ENCODE measurements at regions of chr9 and their contacts with region 1.

Region 1: DNA sequence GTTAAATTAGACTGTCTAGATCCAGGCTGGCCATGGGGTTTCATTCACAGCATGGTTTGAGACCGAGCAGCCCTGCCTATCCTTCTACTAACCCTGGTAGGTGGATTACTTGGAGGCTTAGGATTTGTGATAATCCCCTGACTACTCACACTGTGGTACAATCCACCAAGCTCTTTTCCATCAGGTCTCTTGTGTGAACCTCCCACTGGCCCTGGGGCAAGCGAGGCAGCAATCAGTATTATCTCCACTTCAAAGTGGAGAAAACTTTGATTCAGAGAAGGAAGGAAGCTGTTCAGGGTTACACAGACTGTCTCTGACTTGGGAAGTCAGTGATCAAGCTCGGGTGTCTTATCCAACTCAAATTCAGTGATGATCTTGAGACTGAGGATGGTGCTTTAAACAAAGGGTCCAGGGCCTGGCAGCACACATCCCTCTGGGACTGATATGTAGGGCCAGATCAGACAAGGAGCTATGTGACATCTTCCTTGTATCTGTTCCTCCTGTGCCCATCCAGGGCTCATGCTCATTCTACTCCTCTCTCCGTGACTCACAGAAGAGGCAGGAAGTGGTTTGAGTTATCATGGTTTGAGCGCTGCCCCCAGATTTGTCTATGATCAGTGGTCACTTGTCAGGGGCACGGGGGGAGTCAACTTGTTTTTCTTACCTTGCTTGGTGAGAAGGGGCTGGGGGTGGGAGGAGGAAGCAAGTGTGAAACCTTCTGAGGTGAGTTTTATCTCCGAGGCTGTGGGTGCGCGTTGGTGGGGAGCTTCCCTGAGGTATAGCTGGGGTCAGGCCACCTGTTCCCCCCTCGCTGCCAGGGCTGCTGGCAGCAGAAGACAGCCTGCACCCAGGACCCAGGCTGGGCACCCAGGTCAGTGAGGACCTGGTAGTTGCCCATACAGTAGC is 48.6 kb downstream of the RGS3 start:
- DNase-seq: peak; percentile 57
- H3K4me3 Mint-ChIP-seq: peak overlapping the region; percentile 62
- H3K27ac Mint-ChIP-seq: peak overlapping the region; percentile 90
- H3K4me1 Mint-ChIP-seq: peaks cover 76% of the 10 kb centered on the region
- H3K27me3 Mint-ChIP-seq: peaks cover 3% of the 10 kb centered on the region

Region 2: GRCh38 chr9:113150670-113151611 is 361.2 kb before region 1 on chr9 and contains the start of gene SLC31A2:
- intact Hi-C with region 1: loop called (anchors 1 kb)
- DNase-seq: peak; percentile 84
- H3K4me3 Mint-ChIP-seq: peak within 1 kb of the TSS; percentile 80
- H3K27ac Mint-ChIP-seq: peak within 1 kb of the TSS; percentile 44
- H3K4me1 Mint-ChIP-seq: peaks cover 34% of the 10 kb centered on the region
- H3K27me3 Mint-ChIP-seq: peaks cover 13% of the 10 kb centered on the region
- total RNA-seq, gene SLC31A2: 6.0 and 6.5 TPM in 2 replicates

Region 3: DNA sequence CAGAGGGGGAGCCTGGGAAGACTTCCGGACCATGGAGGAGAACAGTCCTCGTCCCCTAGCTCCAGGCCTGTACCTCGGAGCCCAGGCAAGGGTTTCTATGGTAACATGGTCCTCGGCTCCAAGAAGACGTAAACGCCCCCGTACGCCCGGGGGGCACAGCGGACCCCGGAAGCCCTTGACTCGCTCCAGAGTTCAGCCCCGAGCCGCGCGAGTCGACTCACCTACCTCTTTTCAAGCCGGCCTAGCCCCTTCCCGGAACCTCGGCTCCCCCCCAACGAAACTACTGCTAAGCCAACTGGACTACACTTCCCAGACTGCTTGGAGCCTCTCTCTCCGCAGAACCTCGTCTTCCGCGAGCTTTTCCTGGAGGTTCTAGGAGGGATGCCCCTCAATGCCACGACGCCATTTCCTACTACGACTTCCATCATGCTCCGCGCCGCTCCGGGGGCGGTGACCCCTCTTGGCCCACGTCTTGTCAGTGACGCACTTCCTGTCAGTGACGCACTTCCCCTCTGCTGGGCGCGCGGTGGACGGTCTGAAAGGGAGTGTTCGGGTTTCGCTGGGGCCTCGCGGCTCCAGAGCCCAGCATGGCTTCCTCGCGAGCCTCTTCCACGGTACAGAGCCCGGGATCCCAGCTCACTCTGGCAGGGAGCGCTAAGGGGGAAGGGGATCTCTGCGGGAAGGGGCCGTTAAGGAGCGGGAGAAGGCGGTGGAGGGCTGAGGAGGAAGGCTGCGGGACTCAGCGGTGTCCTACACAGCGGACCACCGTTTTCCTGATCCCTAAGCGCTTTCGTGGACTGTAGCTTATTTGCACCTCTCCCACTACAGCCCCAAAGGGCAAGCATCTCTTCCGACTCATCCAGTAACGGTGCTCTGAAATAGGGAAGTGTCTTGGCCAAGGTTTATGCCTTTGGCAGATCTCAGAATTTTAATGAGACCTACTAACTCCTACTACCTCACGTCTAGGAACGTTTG is 236.7 kb before region 1 on chr9 and contains the starts of genes CDC26 and PRPF4:
- intact Hi-C with region 1: loop called (anchors 1 kb)
- DNase-seq: peak; percentile 94
- H3K4me3 Mint-ChIP-seq: no peak within 1 kb of the TSS
- H3K27ac Mint-ChIP-seq: no peak within 1 kb of the TSS
- H3K4me1 Mint-ChIP-seq: peaks cover 30% of the 10 kb centered on the region
- H3K27me3 Mint-ChIP-seq: no peaks in the 10 kb centered on the region
- total RNA-seq, gene CDC26: 49.9 and 50.6 TPM in 2 replicates
- total RNA-seq, gene PRPF4: 59.2 and 60.2 TPM in 2 replicates

Region 4: GRCh38 chr9:113349445-113350094 is 162.5 kb before region 1 on chr9 and contains the start of gene BSPRY:
- intact Hi-C with region 1: loop called (anchors 2 kb)
- DNase-seq: peak; percentile 51
- H3K4me3 Mint-ChIP-seq: peak within 1 kb of the TSS; percentile 93
- H3K27ac Mint-ChIP-seq: peak within 1 kb of the TSS; percentile 92
- H3K4me1 Mint-ChIP-seq: peaks cover 68% of the 10 kb centered on the region
- H3K27me3 Mint-ChIP-seq: no peaks in the 10 kb centered on the region
- total RNA-seq, gene BSPRY: 12.3 and 12.8 TPM in 2 replicates

Region 5: GRCh38 chr9:113474360-113475028 is 37.6 kb before region 1 on chr9:
- intact Hi-C with region 1: no loop called
- DNase-seq: no peak
- H3K4me3 Mint-ChIP-seq: no peak overlapping the region
- H3K27ac Mint-ChIP-seq: no peak overlapping the region
- H3K4me1 Mint-ChIP-seq: peaks cover 8% of the 10 kb centered on the region
- H3K27me3 Mint-ChIP-seq: peaks cover 16% of the 10 kb centered on the region

Region 6: GRCh38 chr9:113523421-113524236 is 11.5 kb after region 1 on chr9:
- intact Hi-C with region 1: loop called (anchors 1 kb)
- DNase-seq: peak; percentile 54
- H3K4me3 Mint-ChIP-seq: peak overlapping the region; percentile 77
- H3K27ac Mint-ChIP-seq: peak overlapping the region; percentile 86
- H3K4me1 Mint-ChIP-seq: peaks cover 85% of the 10 kb centered on the region
- H3K27me3 Mint-ChIP-seq: peaks cover 2% of the 10 kb centered on the region

Region 7: DNA sequence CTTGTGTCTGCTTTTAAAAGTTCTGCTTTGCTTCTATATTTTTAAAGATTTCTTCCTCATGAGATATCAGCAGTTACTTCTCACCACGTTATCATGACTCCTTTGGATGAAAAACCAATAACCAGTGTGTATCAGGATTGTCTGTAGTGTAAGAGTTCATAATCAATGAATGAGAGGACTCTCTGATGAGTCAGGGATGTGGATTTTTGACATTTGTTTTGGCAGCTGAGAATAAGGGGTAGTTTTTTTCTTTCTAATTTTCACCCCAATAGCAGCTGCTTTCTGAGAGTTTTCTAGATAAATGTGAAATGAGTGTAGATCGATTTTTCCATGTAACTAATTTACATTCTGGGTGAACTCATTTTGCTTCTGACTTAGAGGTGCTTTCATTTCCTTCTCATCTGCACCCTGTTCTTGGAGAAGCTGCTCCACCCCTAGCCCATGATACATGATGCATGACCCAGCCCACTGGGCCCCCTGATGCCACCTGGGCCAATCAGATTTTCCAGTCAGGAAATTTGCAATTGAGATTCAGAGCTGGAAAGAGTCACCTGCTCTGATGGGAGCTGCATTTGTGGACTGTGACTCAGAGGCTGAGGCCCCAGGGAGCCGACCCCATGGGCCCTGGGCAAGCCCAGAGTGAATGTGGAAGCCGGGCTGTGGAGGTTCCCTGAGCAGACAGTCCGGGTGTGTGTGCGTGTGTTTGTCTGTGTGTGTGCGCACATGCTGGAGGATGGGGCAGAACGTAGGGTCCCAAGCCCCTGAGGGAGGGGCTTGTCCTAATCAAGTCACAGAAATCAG is 110.7 kb after region 1 on chr9:
- intact Hi-C with region 1: loop called (anchors 1 kb)
- DNase-seq: peak; percentile 18
- H3K4me3 Mint-ChIP-seq: peak overlapping the region; percentile 43
- H3K27ac Mint-ChIP-seq: peak overlapping the region; percentile 93
- H3K4me1 Mint-ChIP-seq: peaks cover 47% of the 10 kb centered on the region
- H3K27me3 Mint-ChIP-seq: peaks cover 2% of the 10 kb centered on the region